ENCODE measurements at regions of chr9 and their contacts with region 1.

Region 1: DNA sequence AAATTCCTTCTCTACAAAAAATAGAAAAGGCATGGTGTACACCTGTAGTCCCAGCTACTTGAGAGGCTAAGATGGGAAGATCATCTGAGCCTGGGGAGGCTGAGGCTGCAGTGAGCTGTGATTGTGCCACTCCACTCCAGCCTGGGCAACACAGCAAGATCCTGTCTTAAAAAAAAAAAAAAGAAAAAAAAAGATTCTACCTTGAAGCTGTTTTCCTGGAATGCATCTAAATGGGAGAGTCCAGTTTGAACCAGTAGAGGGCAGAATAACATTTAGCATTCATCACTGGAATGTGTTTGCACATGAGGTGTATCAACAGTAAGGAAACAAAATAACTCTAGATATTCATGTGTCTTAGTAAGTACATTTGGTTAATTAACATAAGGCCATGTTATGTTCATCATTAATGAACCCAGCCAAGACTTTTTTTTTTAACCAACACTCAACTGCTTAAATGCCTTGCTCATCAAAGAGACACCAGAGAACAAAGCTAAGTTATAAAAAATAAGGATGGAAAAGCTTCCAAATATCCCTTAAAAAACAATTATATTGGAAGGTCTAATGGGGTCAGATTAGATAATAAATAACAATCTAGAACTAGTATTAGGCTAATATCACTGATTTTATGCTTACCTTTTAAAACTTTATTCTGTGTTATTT is 16.1 kb downstream of the IFNE start:
- DNase-seq: peak; percentile 51
- H3K4me3 Mint-ChIP-seq: no peak overlapping the region
- H3K27ac Mint-ChIP-seq: no peak overlapping the region
- H3K4me1 Mint-ChIP-seq: peaks cover 2% of the 10 kb centered on the region
- H3K27me3 Mint-ChIP-seq: peaks cover 34% of the 10 kb centered on the region

Region 2: GRCh38 chr9:21443849-21444625 is 22.0 kb before region 1 on chr9:
- CTCF ChIA-PET with region 1: no interaction called
- POLR2A ChIA-PET with region 1: no interaction called
- DNase-seq: peak; percentile 48
- H3K4me3 Mint-ChIP-seq: peak overlapping the region; percentile 9
- H3K27ac Mint-ChIP-seq: peak overlapping the region; percentile 74
- H3K4me1 Mint-ChIP-seq: peaks cover 18% of the 10 kb centered on the region
- H3K27me3 Mint-ChIP-seq: peaks cover 26% of the 10 kb centered on the region

Region 3: DNA sequence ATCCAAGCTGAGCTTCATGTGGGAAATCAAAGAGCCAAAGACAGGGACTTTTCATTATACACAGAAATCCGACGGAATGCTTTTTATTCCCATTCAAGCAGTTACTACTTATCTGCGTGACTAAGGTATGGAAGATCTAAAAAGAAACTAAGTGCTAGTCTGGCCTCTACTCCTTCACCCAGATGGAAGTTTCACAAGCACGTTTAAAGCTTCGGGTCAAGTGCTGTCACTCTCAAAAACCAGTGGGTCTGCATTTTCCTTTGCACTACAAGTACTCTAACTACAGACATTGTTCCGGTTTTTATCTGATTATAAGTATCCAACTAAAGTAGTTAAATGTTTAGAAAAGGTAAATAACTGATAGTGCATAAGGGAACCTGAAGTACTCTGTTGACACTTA is 322.8 kb after region 1 on chr9:
- CTCF ChIA-PET with region 1: interaction called, 4 read pairs
- POLR2A ChIA-PET with region 1: interaction called, 15 read pairs
- DNase-seq: no peak
- H3K4me3 Mint-ChIP-seq: no peak overlapping the region
- H3K27ac Mint-ChIP-seq: no peak overlapping the region
- H3K4me1 Mint-ChIP-seq: peaks cover 7% of the 10 kb centered on the region
- H3K27me3 Mint-ChIP-seq: peaks cover 52% of the 10 kb centered on the region

Measured in activated CD4-positive, alpha-beta T cell treated with anti-CD3 and anti-CD28 coated beads, Interleukin-2, amount 10 ng/mL, durations not matched to agents 7 days and 5 days (primary cell).